H1 (cell line): ENCODE measurements at regions of chr15 and their contacts with region 1.

Region 1: DNA sequence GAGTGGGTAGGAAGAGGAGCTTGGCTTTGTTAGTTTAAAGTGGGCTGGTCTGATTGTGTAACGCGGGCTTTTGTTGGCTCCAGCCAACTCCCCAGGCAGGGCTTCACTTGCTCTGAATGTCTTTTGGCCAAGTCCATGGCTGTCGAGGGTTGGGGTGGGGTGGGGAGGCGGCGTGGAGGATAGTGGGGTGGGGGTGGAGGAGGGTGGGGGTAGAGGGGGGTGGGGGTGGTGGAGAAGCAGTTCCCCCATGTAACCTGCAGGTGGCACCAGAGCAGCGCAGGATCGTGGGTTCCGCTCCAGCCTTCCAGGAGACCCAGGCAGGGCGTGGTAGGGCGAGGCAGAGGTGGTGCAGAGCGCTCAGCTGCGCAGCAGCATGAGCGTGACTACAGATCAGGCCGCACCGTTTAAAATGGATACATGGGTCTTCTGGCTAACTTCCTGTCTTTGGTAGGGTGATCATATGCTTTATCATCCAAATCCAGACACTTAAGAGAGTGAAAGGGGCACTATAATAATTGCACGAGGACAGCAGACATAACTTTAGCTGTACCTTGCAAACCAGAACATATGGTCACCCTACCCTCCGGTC is 28.3 kb downstream of the GOLGA6A start:
- DNase-seq: peak; percentile 21 to 86
- H3K4me3 ChIP-seq: no peak overlapping the region
- H3K27ac ChIP-seq: no peak overlapping the region
- H3K4me1 ChIP-seq: peaks cover 0 to 6% (median 0%) of the 10 kb centered on the region in 4 experiments; a peak in 2 of 7 replicates
- H3K27me3 ChIP-seq: peaks cover 0 to 6% (median 4%) of the 10 kb centered on the region in 4 experiments; a peak in 3 of 7 replicates
- CTCF ChIP-seq: peak; percentile 64 to 85 (median 77)
- EP300 ChIP-seq: no peak
- POLR2A ChIP-seq: no peak
- RAD21 ChIP-seq: peak; percentile 79 to 80

Region 2: GRCh38 chr15:73991726-73992593 is 62.1 kb before region 1 on chr15 and contains the start of gene STOML1:
- CTCF ChIA-PET with region 1: interaction called, 10 read pairs
- POLR2A ChIA-PET with region 1: no interaction called
- DNase-seq: peak; percentile 71 to 100
- H3K4me3 ChIP-seq: peak within 1 kb of the TSS; percentile 33 to 90 (median 62)
- H3K27ac ChIP-seq: no peak within 1 kb of the TSS
- H3K4me1 ChIP-seq: peaks cover 0 to 7% (median under 1%) of the 10 kb centered on the region in 4 experiments; a peak in 3 of 7 replicates
- H3K27me3 ChIP-seq: peaks cover 0 to 8% (median 1%) of the 10 kb centered on the region in 4 experiments; a peak in 1 of 7 replicates
- CTCF ChIP-seq: peak; percentile 87 to 89 (median 89)
- EP300 ChIP-seq: no peak; a peak in 1 of 3 replicates
- POLR2A ChIP-seq: peak in 1 of 2 experiments; percentile 30; a peak in 1 of 3 replicates
- RAD21 ChIP-seq: 0 out of 4 replicates have a peak, but pooled peaks of 1 of the 2 experiments have one; percentile 15
- total RNA-seq, gene STOML1: 2.6 and 3.8 TPM in 2 replicates

Region 3: GRCh38 chr15:74108111-74108510 is 54.1 kb after region 1 on chr15:
- CTCF ChIA-PET with region 1: interaction called, 20 read pairs
- POLR2A ChIA-PET with region 1: interaction called, 3 read pairs
- DNase-seq: no peak
- H3K4me3 ChIP-seq: no peak overlapping the region
- H3K27ac ChIP-seq: no peak overlapping the region
- H3K4me1 ChIP-seq: no peaks in the 10 kb centered on the region
- H3K27me3 ChIP-seq: no peaks in the 10 kb centered on the region
- CTCF ChIP-seq: no peak
- EP300 ChIP-seq: no peak
- POLR2A ChIP-seq: no peak
- RAD21 ChIP-seq: no peak

Region 4: GRCh38 chr15:74134387-74135027 is 80.5 kb after region 1 on chr15:
- CTCF ChIA-PET with region 1: interaction called, 18 read pairs
- POLR2A ChIA-PET with region 1: interaction called, 3 read pairs
- DNase-seq: peak in 1 of 2 experiments; percentile 89
- H3K4me3 ChIP-seq: peak overlapping the region in 3 of 4 experiments; percentile 20 to 62 (median 36); a peak in 6 of 8 replicates
- H3K27ac ChIP-seq: no peak overlapping the region
- H3K4me1 ChIP-seq: peaks cover 0 to 69% (median 57%) of the 10 kb centered on the region in 4 experiments; a peak in 6 of 7 replicates
- H3K27me3 ChIP-seq: peaks cover 72 to 96% (median 91%) of the 10 kb centered on the region in 4 experiments
- CTCF ChIP-seq: peak in 2 of 3 experiments; percentile 65 to 71; a peak in 3 of 4 replicates
- EP300 ChIP-seq: no peak
- POLR2A ChIP-seq: no peak
- RAD21 ChIP-seq: peak; percentile 48 to 58

Region 5: DNA sequence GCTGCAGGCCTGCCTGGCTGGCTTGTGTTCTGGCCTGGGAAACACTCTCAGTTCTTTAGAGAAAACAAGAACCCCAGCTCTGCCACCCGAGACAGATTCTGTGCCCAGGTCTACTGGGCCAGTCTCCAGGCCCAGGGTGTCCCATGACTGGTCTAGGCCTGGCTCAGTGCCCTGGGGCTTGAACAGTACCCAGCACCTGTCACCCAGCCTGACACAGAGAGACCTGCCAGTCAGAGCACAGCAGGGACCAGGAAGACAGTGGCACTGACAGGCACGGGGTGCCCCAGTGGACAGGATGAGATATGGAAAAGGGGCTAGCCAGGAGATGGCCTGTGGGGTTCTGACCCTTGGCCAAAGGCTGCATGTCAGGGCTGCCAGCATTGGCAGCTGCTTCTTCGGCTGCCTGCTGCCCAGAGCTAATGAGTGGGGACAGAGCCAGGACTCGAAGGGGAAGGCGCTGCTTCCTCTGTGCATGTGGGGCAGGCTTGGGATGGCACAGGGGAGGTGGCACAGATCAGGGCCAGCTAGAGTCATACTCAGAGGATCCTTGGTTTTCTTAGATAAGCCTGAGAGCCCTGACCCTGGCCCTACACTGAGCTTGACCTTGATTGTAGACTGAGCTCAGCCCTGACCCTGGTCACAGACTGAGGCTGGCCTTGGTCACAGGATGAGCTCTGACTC is 197.2 kb after region 1 on chr15:
- CTCF ChIA-PET with region 1: no interaction called
- POLR2A ChIA-PET with region 1: no interaction called
- DNase-seq: no peak
- H3K4me3 ChIP-seq: no peak overlapping the region
- H3K27ac ChIP-seq: no peak overlapping the region
- H3K4me1 ChIP-seq: peaks cover 3 to 6% (median 5%) of the 10 kb centered on the region in 4 experiments
- H3K27me3 ChIP-seq: no peaks in the 10 kb centered on the region; a peak in 3 of 7 replicates
- CTCF ChIP-seq: no peak
- EP300 ChIP-seq: no peak
- POLR2A ChIP-seq: no peak
- RAD21 ChIP-seq: no peak

Region 6: GRCh38 chr15:74302821-74303359 is 248.9 kb after region 1 on chr15:
- CTCF ChIA-PET with region 1: interaction called, 93 read pairs
- POLR2A ChIA-PET with region 1: no interaction called
- DNase-seq: peak; percentile 47 to 87
- H3K4me3 ChIP-seq: no peak overlapping the region
- H3K27ac ChIP-seq: no peak overlapping the region
- H3K4me1 ChIP-seq: peaks cover 11 to 49% (median 29%) of the 10 kb centered on the region in 4 experiments
- H3K27me3 ChIP-seq: peaks cover 2 to 31% (median 25%) of the 10 kb centered on the region in 4 experiments; a peak in 6 of 7 replicates
- CTCF ChIP-seq: peak; percentile 81 to 92 (median 85)
- EP300 ChIP-seq: no peak
- POLR2A ChIP-seq: no peak
- RAD21 ChIP-seq: peak; percentile 80 to 89